CD8-positive, alpha-beta T cell (primary cell): ENCODE measurements at regions of chr1 and their contacts with region 1.

Region 1: DNA sequence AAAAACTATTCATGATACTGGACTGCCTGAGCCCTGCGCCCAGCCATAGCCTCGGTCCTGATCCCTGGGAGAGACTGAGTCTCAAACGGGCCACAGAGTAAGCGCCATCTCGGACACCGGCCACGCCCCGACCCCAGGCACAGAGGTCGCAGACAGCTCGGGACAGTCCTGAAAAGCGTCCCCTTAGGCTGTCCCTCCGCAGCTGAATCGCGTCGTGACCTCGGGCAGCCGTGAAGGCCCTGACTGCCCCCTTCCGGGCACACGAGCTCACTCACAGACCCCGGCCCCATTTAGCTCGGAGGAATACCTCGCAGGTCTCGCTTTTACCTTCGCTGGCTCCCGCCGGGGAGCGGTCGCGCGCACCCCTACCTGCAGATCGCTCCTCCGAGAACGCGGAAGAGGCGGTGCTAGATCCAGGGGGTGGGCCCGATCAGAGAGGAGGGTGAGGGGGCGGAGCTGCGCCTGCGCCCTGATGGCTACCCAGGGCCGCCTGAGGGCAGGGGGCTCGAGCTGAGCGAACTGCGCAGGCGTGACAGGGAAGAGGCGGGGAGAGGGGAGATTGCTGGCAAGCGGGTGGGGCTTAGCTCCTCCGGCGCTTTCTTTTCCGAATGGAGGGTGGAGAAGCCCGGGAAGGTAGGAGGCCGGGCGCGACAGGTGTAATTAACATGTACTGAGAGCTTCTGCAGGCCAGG is at the start of gene MKNK1:
- DNase-seq: peak; percentile 94 to 99 (median 99)
- ATAC-seq: peak; percentile 98
- H3K4me3 ChIP-seq: peak within 1 kb of the TSS; percentile 91 to 98
- H3K4me3 Mint-ChIP-seq: peak within 1 kb of the TSS; percentile 92
- H3K27ac ChIP-seq: peak within 1 kb of the TSS; percentile 73 to 79
- H3K27ac Mint-ChIP-seq: peak within 1 kb of the TSS; percentile 92
- H3K4me1 ChIP-seq: peaks cover 43% of the 10 kb centered on the region
- H3K4me1 Mint-ChIP-seq: peaks cover 65% of the 10 kb centered on the region
- H3K27me3 ChIP-seq: no peaks in the 10 kb centered on the region
- H3K27me3 Mint-ChIP-seq: no peaks in the 10 kb centered on the region
- CTCF ChIP-seq: no peak
- total RNA-seq, gene MKNK1: 30.3 to 30.6 TPM

Region 2: GRCh38 chr1:46527474-46528296 is 76.3 kb before region 1 on chr1:
- CTCF ChIA-PET with region 1: no interaction called
- POLR2A ChIA-PET with region 1: interaction called, 3 read pairs
- intact Hi-C with region 1: loop called in 1 of 2 experiments (anchors 5 kb)
- DNase-seq: peak; percentile 35 to 78 (median 71)
- ATAC-seq: peak; percentile 68
- H3K4me3 ChIP-seq: no peak overlapping the region
- H3K4me3 Mint-ChIP-seq: no peak overlapping the region
- H3K27ac ChIP-seq: no peak overlapping the region
- H3K27ac Mint-ChIP-seq: no peak overlapping the region
- H3K4me1 ChIP-seq: no peaks in the 10 kb centered on the region
- H3K4me1 Mint-ChIP-seq: no peaks in the 10 kb centered on the region
- H3K27me3 ChIP-seq: no peaks in the 10 kb centered on the region
- H3K27me3 Mint-ChIP-seq: peaks cover 44% of the 10 kb centered on the region
- CTCF ChIP-seq: peak; percentile 55

Region 3: DNA sequence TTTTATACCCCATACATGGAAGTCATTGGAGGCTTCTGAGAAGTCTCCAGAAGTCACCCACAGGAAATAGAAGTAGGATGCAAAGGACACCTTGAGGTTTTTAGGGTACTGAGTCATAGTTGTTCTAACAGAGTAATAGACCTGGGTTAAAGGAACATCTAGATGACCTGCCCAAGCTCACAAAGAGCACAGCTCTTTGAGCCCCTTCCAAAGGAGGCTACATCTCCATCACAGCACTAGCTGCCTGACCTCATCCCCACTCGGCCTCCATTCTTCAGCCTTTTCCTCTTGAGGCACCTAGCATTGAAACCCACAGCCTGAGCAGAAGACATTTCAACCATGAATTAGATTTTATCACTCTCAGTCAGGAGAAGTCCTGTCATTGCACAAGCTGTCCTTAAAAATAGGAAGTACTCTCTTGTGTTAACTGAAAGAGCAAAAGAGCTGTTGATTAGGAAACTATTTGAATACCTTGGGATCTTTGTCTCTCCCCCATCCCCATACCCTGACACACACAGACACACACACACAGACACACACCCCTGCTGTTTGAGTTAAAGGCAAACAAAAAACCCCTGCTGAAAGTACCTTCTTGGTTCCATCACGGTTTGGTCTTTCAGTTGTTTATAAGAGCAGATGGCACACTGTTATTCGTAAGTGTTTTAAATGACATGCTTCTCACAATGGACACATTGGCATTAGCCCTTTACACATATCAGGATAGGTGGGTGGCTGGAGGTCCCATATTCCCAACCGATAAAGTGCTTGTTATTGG is 22.1 kb before region 1 on chr1:
- CTCF ChIA-PET with region 1: no interaction called
- POLR2A ChIA-PET with region 1: no interaction called
- intact Hi-C with region 1: no loop called
- DNase-seq: peak in 2 of 9 experiments; percentile 12 to 14
- ATAC-seq: peak; percentile 82
- H3K4me3 ChIP-seq: no peak overlapping the region
- H3K4me3 Mint-ChIP-seq: no peak overlapping the region
- H3K27ac ChIP-seq: no peak overlapping the region
- H3K27ac Mint-ChIP-seq: peak overlapping the region; percentile 64
- H3K4me1 ChIP-seq: no peaks in the 10 kb centered on the region
- H3K4me1 Mint-ChIP-seq: peaks cover 19% of the 10 kb centered on the region
- H3K27me3 ChIP-seq: no peaks in the 10 kb centered on the region
- H3K27me3 Mint-ChIP-seq: no peaks in the 10 kb centered on the region
- CTCF ChIP-seq: no peak

Region 4: GRCh38 chr1:46622344-46622743 is 18.3 kb after region 1 on chr1:
- CTCF ChIA-PET with region 1: interaction called, 22 read pairs
- POLR2A ChIA-PET with region 1: interaction called, 102 read pairs
- intact Hi-C with region 1: no loop called
- DNase-seq: no peak
- ATAC-seq: no peak
- H3K4me3 ChIP-seq: no peak overlapping the region
- H3K4me3 Mint-ChIP-seq: no peak overlapping the region
- H3K27ac ChIP-seq: no peak overlapping the region
- H3K27ac Mint-ChIP-seq: no peak overlapping the region
- H3K4me1 ChIP-seq: no peaks in the 10 kb centered on the region
- H3K4me1 Mint-ChIP-seq: peaks cover 3% of the 10 kb centered on the region
- H3K27me3 ChIP-seq: no peaks in the 10 kb centered on the region
- H3K27me3 Mint-ChIP-seq: no peaks in the 10 kb centered on the region
- CTCF ChIP-seq: no peak

Region 5: DNA sequence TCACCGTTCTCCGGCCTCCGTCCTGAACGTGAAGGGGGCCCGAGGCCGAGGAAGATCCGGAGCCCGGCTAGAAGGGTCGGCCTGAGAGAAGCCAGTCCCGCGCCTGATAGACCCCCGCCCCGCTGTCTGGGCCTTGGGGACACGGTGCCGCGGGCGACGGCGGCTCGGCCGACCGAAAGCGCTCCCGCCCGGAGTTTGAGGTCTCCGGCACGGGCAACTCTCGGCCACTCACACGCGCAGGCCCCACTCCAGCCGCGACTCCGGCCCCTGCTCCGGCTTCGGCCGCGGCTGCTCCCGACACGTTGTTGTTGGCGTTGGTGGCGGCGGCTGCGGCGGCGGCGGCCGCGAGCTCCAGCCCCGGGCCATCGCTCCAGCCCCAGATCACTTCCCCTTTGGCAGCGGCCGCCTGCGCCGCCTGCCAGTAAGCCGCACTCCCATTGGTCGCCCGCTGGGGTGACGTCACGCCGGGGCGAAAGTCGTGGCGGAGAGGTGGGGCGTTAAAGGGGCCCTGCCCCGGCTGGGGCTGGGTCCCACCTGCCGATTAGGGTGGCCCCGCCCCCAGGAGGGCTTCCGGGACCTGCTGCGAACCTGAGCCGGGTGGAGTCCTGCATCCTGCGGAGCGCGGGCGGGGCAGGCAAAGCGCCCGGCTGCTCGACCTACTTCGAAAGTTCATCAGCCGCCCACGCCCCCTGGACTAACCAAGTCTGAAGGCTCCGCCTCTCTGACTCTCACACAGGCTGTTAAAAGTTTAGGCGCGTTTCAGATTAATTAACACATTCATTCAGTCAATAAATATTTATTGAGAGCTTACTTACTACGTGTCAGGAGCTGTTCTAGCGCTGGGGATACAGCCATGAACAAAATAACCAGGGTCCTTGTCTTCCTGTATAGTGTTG is 115.0 kb after region 1 on chr1 and contains the start of gene EFCAB14:
- CTCF ChIA-PET with region 1: interaction called, 6 read pairs
- POLR2A ChIA-PET with region 1: interaction called, 4 read pairs
- intact Hi-C with region 1: loop called (anchors 1 kb)
- DNase-seq: peak; percentile 98 to 100 (median 99)
- ATAC-seq: peak; percentile 99
- H3K4me3 ChIP-seq: peak within 1 kb of the TSS; percentile 86 to 90
- H3K4me3 Mint-ChIP-seq: peak within 1 kb of the TSS; percentile 89
- H3K27ac ChIP-seq: peak within 1 kb of the TSS; percentile 77 to 81
- H3K27ac Mint-ChIP-seq: peak within 1 kb of the TSS; percentile 91
- H3K4me1 ChIP-seq: peaks cover 28% of the 10 kb centered on the region
- H3K4me1 Mint-ChIP-seq: peaks cover 39% of the 10 kb centered on the region
- H3K27me3 ChIP-seq: no peaks in the 10 kb centered on the region
- H3K27me3 Mint-ChIP-seq: no peaks in the 10 kb centered on the region
- CTCF ChIP-seq: no peak
- total RNA-seq, gene EFCAB14: 33.1 to 36.9 TPM